Activated T-helper 1 cell treated with anti-CD3 and anti-CD28 coated beads, Interleukin-12 subunit alpha, Interleukin-12 subunit beta, Interleukin-2, Interleukin-4 antibody, amounts not matched to agents 30 ng/mL and 10 ng/mL and 1 ng/mL, durations not matched to agents 14 hours and 24 hours and 36 hours (primary cell): ENCODE measurements at regions of chr1 and their contacts with region 1.

Region 1: GRCh38 chr1:168603501-168604110 is 27.2 kb downstream of the XCL1 start:
- DNase-seq: peak; percentile 41
- H3K4me3 Mint-ChIP-seq: no peak overlapping the region
- H3K27ac Mint-ChIP-seq: no peak overlapping the region
- H3K4me1 Mint-ChIP-seq: no peaks in the 10 kb centered on the region
- H3K27me3 Mint-ChIP-seq: peaks cover 13% of the 10 kb centered on the region

Region 2: DNA sequence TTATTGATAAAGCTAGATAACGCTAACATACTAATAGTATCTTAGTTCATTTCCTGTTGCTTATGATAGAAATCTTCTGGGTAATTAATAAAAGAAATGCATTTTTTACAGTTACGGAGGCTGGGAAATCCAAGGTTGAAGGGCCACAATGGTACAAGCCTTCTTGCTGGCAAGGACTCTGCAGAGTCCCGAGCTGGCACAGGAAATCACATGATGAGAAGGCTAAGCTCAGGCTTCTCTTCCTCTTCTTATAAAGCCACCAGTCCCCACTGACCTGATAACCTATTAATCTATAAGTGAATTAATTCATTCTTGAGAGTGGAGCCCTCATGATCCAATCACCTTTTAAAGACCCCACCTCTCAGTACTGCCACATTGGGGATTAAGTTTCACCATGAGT is 549.5 kb before region 1 on chr1:
- intact Hi-C with region 1: no loop called
- DNase-seq: no peak
- H3K4me3 Mint-ChIP-seq: no peak overlapping the region
- H3K27ac Mint-ChIP-seq: no peak overlapping the region
- H3K4me1 Mint-ChIP-seq: peaks cover 4% of the 10 kb centered on the region
- H3K27me3 Mint-ChIP-seq: no peaks in the 10 kb centered on the region

Region 3: DNA sequence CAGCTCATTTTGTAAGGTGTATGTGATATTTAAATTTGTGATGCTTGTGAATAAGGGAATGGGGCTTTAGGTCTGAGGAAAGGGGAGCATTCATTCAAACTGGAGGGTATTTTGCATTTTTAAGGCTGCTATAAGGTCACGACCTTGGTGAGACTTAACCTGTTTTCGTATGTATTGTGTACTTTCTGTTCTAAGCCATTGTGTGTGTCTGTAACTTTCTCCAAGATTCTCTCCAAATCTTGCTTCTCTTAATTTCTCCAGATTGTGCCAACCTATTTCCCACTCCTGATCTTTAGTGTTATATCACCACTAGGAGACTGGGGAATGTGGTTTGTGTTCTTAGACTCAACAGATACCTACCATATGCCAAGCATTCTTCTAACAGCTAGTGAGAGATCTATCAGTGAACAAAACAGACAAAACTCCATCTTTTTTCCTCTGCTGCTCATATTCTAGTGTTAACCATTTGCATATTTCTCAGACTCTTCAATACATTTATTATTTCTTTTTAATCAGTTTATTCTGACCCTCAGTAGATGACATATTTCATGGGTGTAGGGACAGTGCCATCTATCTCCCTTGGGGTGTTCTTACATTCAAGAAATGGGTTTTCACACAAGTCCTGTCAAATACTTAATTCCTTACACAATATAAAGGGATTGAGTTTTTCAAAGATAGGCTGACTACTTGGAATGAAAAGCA is 530.3 kb after region 1 on chr1:
- intact Hi-C with region 1: loop called (anchors 10 kb)
- DNase-seq: no peak
- H3K4me3 Mint-ChIP-seq: no peak overlapping the region
- H3K27ac Mint-ChIP-seq: no peak overlapping the region
- H3K4me1 Mint-ChIP-seq: peaks cover 6% of the 10 kb centered on the region
- H3K27me3 Mint-ChIP-seq: peaks cover 4% of the 10 kb centered on the region

Region 4: DNA sequence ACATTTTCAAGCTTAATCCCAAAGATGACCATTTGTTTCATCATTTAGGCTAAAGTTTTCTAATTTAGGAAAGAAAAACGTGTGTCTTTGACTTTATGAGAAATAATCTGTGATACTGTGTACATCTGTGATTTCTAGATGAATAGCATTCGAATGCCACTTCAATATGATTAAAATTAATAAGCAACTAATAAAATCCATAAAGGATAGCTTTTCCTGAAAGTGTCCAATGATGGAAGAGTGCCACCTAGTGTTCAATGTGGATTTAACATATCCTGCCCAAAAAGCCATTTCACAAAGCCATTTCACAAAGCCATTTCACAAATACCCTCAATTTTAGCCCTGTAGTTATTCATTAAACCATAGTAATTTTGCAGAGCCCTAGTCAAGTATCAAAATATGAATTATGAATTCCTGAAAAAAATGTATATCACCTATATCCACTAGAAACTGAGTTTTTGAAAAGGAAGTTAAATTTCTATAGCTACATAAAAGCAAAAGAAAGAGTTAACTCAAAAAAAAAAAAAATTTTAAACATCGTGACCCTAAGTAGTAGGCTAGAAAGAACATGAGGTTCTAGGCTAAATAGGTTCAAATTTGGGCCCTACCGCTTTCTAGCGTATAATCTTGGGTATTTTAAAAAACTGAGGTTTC is 744.9 kb after region 1 on chr1:
- intact Hi-C with region 1: loop called (anchors 1 kb)
- DNase-seq: no peak
- H3K4me3 Mint-ChIP-seq: no peak overlapping the region
- H3K27ac Mint-ChIP-seq: no peak overlapping the region
- H3K4me1 Mint-ChIP-seq: peaks cover 17% of the 10 kb centered on the region
- H3K27me3 Mint-ChIP-seq: peaks cover 2% of the 10 kb centered on the region

Region 5: DNA sequence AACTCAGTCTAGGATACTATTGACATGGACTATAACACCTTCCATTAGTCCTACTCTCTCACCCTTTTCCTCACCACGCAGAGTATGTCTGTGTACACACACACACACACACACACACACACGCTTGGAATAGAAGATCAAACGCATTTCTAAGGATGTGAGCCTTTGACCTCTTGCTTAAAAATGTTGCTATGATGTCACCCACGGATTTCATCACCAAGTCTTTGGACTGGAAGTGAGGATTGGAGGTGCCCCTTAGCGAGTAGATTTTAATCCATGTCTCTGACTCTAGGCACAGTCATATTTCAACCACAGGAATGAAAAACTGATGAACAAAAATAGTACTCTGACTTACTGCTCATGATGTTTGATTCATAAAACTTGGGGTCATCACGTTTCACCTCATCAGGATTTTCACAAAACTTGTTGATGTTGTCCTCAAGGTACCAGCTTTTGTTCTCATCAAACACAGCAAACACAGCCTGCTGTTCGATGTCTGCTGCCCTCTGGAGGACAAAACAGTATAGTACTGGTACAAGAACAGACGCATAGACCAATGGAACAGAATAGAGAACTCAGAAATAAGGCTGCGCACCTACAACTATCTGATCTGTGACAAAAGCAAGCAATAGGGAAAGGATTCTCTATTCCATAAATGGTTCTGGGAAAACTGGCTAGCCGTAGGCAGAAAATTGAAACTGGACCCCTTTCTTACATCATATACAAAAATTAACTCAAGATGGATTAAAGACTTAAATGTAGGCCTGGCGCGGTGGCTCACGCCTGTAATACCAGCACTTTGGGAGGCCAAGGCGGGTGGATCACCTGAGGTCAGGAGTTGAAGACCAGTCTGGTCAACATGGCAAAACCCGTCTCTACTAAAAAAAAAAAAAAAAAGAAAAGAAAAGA is 942.7 kb after region 1 on chr1:
- intact Hi-C with region 1: loop called (anchors 1 kb)
- DNase-seq: peak; percentile 40
- H3K4me3 Mint-ChIP-seq: no peak overlapping the region
- H3K27ac Mint-ChIP-seq: no peak overlapping the region
- H3K4me1 Mint-ChIP-seq: peaks cover 9% of the 10 kb centered on the region
- H3K27me3 Mint-ChIP-seq: no peaks in the 10 kb centered on the region